ENCODE measurements at regions of chr2 and their contacts with region 1.

Region 1: DNA sequence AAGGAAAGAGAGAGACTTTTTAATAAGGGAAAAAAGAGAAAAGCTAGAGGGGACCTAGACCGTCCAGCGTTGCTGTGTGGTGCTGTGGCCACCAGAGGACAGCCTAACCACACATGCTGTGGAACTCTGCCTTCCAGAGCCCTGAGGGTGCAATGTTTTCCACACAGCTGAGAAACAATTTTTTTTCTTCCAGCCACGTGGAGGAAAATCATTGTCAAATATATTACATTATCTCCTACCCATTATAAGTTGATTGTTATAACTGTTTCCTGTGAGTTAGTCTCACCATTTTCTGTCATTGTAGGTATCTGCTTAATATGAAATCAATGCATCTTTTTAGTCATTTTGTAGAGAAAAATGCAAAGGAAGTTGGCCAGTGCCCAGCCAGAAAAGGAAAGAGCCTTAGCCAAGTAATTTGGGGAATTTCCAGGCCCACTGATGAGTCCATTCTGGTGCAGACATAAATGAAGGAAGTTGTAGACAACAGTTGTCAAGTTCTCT is 5.9 kb upstream of the MRPL19 start:
- DNase-seq: peak; percentile 51
- H3K4me3 Mint-ChIP-seq: no peak overlapping the region
- H3K27ac Mint-ChIP-seq: no peak overlapping the region
- H3K4me1 Mint-ChIP-seq: no peaks in the 10 kb centered on the region
- H3K27me3 Mint-ChIP-seq: peaks cover 24% of the 10 kb centered on the region

Region 2: GRCh38 chr2:75627895-75628504 is 12.7 kb before region 1 on chr2:
- CTCF ChIA-PET with region 1: interaction called, 12 read pairs
- POLR2A ChIA-PET with region 1: no interaction called
- DNase-seq: peak; percentile 61
- H3K4me3 Mint-ChIP-seq: no peak overlapping the region
- H3K27ac Mint-ChIP-seq: no peak overlapping the region
- H3K4me1 Mint-ChIP-seq: no peaks in the 10 kb centered on the region
- H3K27me3 Mint-ChIP-seq: peaks cover 26% of the 10 kb centered on the region

Region 3: DNA sequence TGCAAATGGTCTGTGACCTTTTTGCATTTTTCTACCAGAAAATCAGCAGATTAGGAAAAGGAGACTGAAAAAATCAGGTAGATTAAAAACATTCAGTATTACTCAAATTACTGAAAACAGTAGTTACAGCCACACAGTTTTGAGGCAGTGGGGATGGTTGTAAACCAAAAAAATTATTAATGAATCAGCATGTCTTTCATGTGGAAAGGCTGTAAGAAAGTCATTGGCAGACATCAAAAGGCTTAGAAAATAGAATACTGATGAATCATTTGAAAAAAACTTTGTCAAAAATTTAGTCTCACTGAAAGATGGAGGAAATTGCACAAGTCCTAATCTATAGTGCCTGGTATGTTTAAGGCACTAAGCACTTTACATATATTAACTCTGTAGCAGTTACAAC is 204.0 kb after region 1 on chr2:
- CTCF ChIA-PET with region 1: no interaction called
- POLR2A ChIA-PET with region 1: no interaction called
- DNase-seq: no peak
- H3K4me3 Mint-ChIP-seq: no peak overlapping the region
- H3K27ac Mint-ChIP-seq: no peak overlapping the region
- H3K4me1 Mint-ChIP-seq: no peaks in the 10 kb centered on the region
- H3K27me3 Mint-ChIP-seq: no peaks in the 10 kb centered on the region